Right ventricle myocardium inferior (tissue), 1 donor: ENCODE measurements at regions of chr10 and their contacts with region 1.

Region 1: DNA sequence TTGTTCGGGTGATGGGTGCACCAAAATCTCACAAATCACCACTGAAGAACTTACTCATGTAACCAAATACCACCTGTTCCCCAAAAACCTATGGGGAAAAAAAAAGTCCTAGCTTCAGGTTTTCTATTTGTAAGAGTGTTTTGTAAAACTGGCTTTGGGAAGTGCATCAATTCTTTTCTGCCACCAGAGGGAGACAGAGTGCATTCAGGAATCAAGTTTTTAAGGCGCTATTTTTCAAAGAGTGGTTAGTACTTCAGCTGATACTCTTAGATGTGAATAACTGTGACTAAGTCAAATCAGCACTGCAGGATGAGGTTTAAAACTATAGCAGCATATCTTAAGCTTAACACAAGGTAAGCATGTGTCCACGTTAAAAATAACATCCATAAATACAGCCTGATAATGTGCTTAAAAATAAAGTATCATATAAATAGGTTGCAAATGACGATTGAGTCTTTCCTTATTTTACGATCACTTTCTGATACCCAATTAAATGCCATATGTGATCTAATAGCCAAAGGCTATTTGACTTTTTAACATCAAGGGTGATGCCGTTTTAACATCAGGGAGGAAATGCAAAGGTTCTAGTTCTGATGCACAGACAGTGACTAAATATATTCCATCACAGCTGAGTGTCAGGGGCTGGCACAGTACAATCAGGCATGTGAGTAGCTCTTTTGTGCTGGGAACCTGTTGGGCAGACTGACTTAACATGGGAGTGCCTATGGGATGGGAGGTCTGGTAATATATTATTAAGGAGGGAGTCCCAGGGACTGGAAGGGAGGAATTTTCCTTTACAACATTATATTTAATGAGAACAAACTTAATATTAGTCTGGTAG is 10.6 kb upstream of the LYZL2 start:
- DNase-seq: no peak
- ATAC-seq: peak; percentile 47

Region 2: GRCh38 chr10:30671026-30671616 is 31.0 kb after region 1 on chr10:
- intact Hi-C with region 1: loop called (anchors 2 kb)
- DNase-seq: no peak
- ATAC-seq: no peak